Activated naive CD4-positive, alpha-beta T cell treated with anti-CD3 and anti-CD28 coated beads, Interleukin-2, amount 10 ng/mL, durations not matched to agents 7 days and 5 days (primary cell): ENCODE measurements at regions of chr3 and their contacts with region 1.

Region 1: GRCh38 chr3:143674100-143674968 is 173.9 kb downstream of the SLC9A9 start:
- DNase-seq: peak; percentile 79
- H3K4me3 Mint-ChIP-seq: no peak overlapping the region
- H3K27ac Mint-ChIP-seq: no peak overlapping the region
- H3K4me1 Mint-ChIP-seq: peaks cover 11% of the 10 kb centered on the region
- H3K27me3 Mint-ChIP-seq: no peaks in the 10 kb centered on the region

Region 2: GRCh38 chr3:143389388-143389787 is 284.9 kb before region 1 on chr3:
- CTCF ChIA-PET with region 1: no interaction called
- DNase-seq: no peak
- H3K4me3 Mint-ChIP-seq: no peak overlapping the region
- H3K27ac Mint-ChIP-seq: no peak overlapping the region
- H3K4me1 Mint-ChIP-seq: no peaks in the 10 kb centered on the region
- H3K27me3 Mint-ChIP-seq: no peaks in the 10 kb centered on the region

Region 3: GRCh38 chr3:143595456-143596077 is 78.8 kb before region 1 on chr3:
- CTCF ChIA-PET with region 1: no interaction called
- DNase-seq: no peak
- H3K4me3 Mint-ChIP-seq: no peak overlapping the region
- H3K27ac Mint-ChIP-seq: no peak overlapping the region
- H3K4me1 Mint-ChIP-seq: no peaks in the 10 kb centered on the region
- H3K27me3 Mint-ChIP-seq: no peaks in the 10 kb centered on the region

Region 4: GRCh38 chr3:143685491-143685890 is 11.2 kb after region 1 on chr3:
- CTCF ChIA-PET with region 1: interaction called, 11 read pairs
- DNase-seq: no peak
- H3K4me3 Mint-ChIP-seq: no peak overlapping the region
- H3K27ac Mint-ChIP-seq: no peak overlapping the region
- H3K4me1 Mint-ChIP-seq: no peaks in the 10 kb centered on the region
- H3K27me3 Mint-ChIP-seq: no peaks in the 10 kb centered on the region

Region 5: GRCh38 chr3:143727391-143727790 is 53.1 kb after region 1 on chr3:
- CTCF ChIA-PET with region 1: no interaction called
- DNase-seq: no peak
- H3K4me3 Mint-ChIP-seq: no peak overlapping the region
- H3K27ac Mint-ChIP-seq: no peak overlapping the region
- H3K4me1 Mint-ChIP-seq: no peaks in the 10 kb centered on the region
- H3K27me3 Mint-ChIP-seq: no peaks in the 10 kb centered on the region